ENCODE measurements at regions of chr13 and their contacts with region 1.

Region 1: DNA sequence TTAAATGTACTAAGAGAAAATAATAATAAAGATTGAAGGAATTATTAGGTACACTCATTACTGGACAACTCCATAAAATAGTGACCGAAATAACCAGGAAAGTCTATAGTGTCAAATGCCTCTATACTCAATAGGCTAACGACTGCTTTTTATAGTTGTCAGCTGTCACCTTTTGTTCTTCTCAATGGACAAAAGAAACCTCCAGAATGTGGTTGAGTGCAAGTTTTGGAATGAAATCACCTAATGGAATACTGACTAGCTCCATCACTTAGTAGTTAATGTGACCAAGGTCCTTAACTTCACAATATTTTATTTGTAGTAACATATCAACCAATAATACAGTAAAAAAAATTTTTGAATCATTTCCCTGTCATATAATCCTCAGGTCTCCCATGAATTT is 18.1 kb downstream of the TSC22D1 start:
- H3K4me3 ChIP-seq: no peak overlapping the region
- H3K27ac ChIP-seq: no peak overlapping the region
- H3K4me1 ChIP-seq: no peaks in the 10 kb centered on the region
- CTCF ChIP-seq: no peak

Region 2: GRCh38 chr13:44529426-44529825 is 28.6 kb before region 1 on chr13:
- CTCF ChIA-PET with region 1: interaction called, 10 read pairs
- POLR2A ChIA-PET with region 1: no interaction called
- H3K4me3 ChIP-seq: no peak overlapping the region
- H3K27ac ChIP-seq: no peak overlapping the region
- H3K4me1 ChIP-seq: no peaks in the 10 kb centered on the region
- CTCF ChIP-seq: no peak

Measured in HEK293 (cell line).